Prostate gland (tissue), 2 donors: ENCODE measurements at regions of chr9 and their contacts with region 1.

Region 1: DNA sequence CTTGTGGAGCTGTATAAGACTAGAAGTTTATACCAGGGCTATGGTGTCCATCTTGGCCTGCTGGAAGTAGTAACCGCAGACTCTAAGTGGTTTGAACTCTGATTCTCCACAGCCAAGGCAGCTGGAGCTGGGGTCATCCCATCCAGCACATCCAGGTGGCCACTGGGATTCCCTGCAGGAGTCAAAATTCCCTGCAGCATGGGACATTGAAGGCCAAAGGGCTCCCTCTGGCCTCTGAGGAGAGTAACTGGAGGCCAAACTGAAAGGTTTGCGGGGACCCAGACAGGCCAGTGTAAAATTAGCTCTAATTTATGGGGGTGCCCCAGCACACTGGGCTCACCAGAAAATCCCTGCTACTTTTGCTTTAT is 12.2 kb upstream of the PRXL2C start:
- DNase-seq: no peak
- H3K4me3 ChIP-seq: no peak overlapping the region
- H3K27ac ChIP-seq: no peak overlapping the region
- H3K4me1 ChIP-seq: no peaks in the 10 kb centered on the region
- H3K27me3 ChIP-seq: no peaks in the 10 kb centered on the region
- CTCF ChIP-seq: no peak
- POLR2A ChIP-seq: no peak

Region 2: DNA sequence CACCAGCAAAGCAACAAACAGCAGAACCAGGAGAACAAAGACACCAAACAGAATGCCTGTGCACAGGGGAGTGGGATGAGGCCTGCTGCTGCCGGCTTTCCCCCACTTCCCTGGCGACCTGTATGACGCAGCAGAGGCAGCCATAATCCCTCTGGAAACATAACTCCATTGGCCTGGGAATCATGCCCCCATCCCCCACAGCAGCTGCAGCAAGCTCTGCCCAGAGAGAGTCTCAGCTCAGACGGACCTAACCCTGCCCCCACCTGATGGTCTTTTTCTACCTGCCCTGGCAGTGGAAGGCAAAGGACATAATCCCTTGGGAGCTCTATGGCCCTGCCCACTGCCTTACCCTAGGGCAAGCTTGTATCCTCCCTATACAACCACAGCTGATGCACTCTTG is 1268.1 kb before region 1 on chr9:
- intact Hi-C with region 1: no loop called
- DNase-seq: no peak
- H3K4me3 ChIP-seq: no peak overlapping the region
- H3K27ac ChIP-seq: no peak overlapping the region
- H3K4me1 ChIP-seq: no peaks in the 10 kb centered on the region
- H3K27me3 ChIP-seq: no peaks in the 10 kb centered on the region
- CTCF ChIP-seq: no peak
- POLR2A ChIP-seq: no peak

Region 3: DNA sequence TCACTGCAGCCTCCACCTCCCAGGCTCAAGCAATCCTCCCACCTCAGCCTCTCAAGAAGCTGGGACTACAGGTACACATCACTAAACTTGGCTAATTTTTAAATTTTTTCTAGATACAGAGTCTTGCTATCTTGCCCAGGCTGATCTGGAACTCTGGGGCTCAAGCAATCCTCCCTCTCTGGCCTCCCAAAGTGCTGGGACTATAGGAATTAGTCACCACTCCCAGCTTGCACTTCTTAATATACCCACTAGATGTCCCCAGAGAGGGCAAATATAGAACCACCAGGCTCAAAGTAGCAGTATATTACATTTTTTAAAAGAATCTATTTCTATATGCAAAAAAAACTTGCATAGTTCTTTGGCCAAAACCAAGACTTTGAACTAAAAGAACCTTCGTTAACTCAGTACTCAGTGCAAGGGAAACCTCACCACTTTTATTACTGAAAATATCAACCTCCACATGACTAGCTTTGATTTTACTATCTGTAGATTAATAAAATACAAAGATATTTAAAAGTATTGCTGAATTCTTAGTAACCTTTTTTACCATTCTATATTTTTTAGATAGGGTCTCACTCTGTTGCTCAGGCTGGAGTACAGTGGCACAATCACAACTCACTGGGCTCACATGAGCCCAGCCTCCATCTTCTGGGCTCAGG is 339.5 kb before region 1 on chr9:
- intact Hi-C with region 1: loop called (anchors 5 kb)
- DNase-seq: peak; percentile 42
- H3K4me3 ChIP-seq: no peak overlapping the region
- H3K27ac ChIP-seq: no peak overlapping the region
- H3K4me1 ChIP-seq: no peaks in the 10 kb centered on the region
- H3K27me3 ChIP-seq: no peaks in the 10 kb centered on the region
- CTCF ChIP-seq: peak; percentile 48 to 80 (median 68)
- POLR2A ChIP-seq: no peak

Region 4: DNA sequence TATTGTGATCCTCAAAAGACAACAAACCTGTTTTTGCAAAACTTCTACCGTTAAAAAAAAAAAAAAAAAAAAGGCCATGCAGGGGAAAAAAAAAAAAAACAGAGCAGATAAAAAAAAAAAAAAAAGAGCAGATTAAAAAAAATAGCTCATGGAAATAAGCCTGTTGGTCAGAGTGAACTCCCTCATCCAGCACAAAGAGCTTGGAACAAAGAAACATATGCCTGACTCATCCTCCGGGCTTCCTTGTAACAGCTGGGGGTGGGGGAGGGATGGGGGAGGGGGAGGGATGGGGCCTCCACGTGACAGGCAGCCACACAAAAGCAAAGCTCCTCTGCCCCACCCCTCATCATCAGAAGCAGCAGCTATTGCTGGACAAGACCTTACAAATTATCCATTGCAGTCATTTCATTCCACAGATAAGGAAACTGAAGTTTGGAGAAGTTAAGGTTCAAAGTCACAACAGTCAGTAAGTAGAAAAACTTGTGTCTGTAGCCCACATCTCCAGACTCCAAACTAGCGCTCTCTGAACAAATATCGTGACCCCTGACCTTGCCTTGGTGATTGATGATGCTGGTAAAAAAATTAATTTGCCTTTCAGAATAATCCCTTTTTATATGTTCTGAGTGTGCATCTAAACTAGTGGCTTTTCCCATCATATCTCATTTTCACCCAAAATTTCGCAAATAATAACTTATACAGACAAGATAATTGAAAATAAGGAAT is 322.7 kb before region 1 on chr9:
- intact Hi-C with region 1: loop called (anchors 5 kb)
- DNase-seq: no peak
- H3K4me3 ChIP-seq: no peak overlapping the region
- H3K27ac ChIP-seq: no peak overlapping the region
- H3K4me1 ChIP-seq: no peaks in the 10 kb centered on the region
- H3K27me3 ChIP-seq: no peaks in the 10 kb centered on the region
- CTCF ChIP-seq: no peak
- POLR2A ChIP-seq: no peak

Region 5: DNA sequence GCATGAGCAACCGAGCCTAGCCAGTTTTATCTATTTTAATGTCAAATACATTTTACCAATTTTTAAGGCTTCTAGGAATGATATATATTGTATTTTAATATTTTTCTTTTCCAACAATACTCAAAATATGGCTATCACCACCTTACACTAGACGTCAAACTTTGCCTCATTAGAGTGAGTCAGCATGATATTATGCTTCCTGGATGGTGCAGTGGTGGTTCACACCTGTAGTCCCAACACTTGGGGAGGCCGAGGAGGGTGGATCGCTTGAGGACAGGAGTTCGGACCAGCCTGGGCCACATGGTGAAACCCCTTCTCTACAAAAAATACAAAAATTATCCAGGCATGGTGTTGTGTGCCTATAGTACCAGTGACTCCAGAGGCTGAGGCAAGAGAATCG is 40.4 kb before region 1 on chr9:
- intact Hi-C with region 1: no loop called
- DNase-seq: no peak
- H3K4me3 ChIP-seq: no peak overlapping the region
- H3K27ac ChIP-seq: no peak overlapping the region
- H3K4me1 ChIP-seq: no peaks in the 10 kb centered on the region
- H3K27me3 ChIP-seq: no peaks in the 10 kb centered on the region
- CTCF ChIP-seq: no peak
- POLR2A ChIP-seq: no peak

Region 6: GRCh38 chr9:96751815-96752214 is 84.5 kb after region 1 on chr9:
- intact Hi-C with region 1: no loop called
- DNase-seq: no peak
- H3K4me3 ChIP-seq: no peak overlapping the region
- H3K27ac ChIP-seq: no peak overlapping the region
- H3K4me1 ChIP-seq: no peaks in the 10 kb centered on the region
- H3K27me3 ChIP-seq: no peaks in the 10 kb centered on the region
- CTCF ChIP-seq: no peak
- POLR2A ChIP-seq: no peak